CD4-positive, alpha-beta memory T cell (primary cell): ENCODE measurements at regions of chr10 and their contacts with region 1.

Region 1: DNA sequence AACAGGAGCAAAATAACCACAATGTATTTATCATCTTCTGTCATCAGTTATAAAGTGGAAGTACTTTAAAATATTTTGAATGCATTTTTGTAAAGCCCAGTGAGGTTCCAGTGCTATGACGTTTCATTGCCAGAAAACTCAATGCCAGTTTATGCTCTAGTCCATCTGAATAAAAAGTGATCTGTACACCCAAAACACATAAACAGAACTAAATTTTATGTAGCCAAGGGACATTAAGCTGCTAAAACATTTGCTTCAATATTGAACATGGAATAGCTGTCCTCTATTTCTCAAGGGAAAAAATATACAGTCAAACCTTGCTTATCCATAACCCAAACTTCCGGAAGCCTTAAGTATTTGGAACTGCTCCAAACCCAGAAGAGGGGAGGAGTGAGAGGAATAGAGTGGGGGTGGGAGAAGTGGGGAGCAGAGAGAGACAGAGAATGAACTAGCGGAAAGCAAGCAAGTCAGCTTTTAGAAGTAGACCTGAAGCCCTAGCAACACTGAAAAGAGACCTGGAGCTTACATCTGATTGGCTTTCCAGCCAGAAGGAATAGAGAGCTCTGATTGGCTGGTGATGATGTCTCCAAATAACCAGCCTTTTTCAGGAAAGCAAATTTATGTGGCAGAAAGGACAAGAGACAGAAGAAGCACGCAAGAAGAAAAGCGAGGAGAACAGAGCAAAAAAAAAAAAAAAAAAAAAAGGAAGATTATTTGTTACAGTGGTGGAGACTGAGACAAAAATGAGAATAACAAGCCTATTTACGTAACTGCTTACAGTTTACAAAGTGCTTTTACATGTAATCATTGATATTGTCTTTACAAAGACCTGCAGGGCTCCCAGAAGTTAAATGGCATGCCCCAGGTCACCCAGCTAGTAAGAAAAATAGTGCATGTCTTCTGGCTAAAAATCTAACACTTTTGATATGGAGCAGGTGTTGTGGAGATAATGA is 196.0 kb downstream of the RNLS start:
- DNase-seq: peak in 3 of 5 donors; percentile 4 to 31 (median 13)
- H3K4me3 ChIP-seq: peak overlapping the region in 1 of 2 donors; percentile 42
- H3K4me3 Mint-ChIP-seq: peak overlapping the region in 1 of 8 donors; percentile 6
- H3K27ac ChIP-seq: peak overlapping the region; percentile 80
- H3K27ac Mint-ChIP-seq: no peak overlapping the region
- H3K4me1 ChIP-seq: peaks cover 77% of the 10 kb centered on the region
- H3K4me1 Mint-ChIP-seq: peaks cover 16 to 25% (median 21%) of the 10 kb centered on the region in 4 donors
- H3K27me3 ChIP-seq: no peaks in the 10 kb centered on the region
- H3K27me3 Mint-ChIP-seq: no peaks in the 10 kb centered on the region

Region 2: GRCh38 chr10:87850742-87851205 is 536.3 kb before region 1 on chr10:
- CTCF ChIA-PET with region 1: interaction called, 57 read pairs
- POLR2A ChIA-PET with region 1: interaction called, 8 read pairs
- intact Hi-C with region 1: loop called (anchors 1 kb)
- DNase-seq: peak; percentile 38 to 59 (median 52)
- H3K4me3 ChIP-seq: no peak overlapping the region
- H3K4me3 Mint-ChIP-seq: no peak overlapping the region
- H3K27ac ChIP-seq: no peak overlapping the region
- H3K27ac Mint-ChIP-seq: no peak overlapping the region
- H3K4me1 ChIP-seq: peaks cover 6% of the 10 kb centered on the region
- H3K4me1 Mint-ChIP-seq: peaks cover 8 to 14% (median 9%) of the 10 kb centered on the region in 4 donors
- H3K27me3 ChIP-seq: no peaks in the 10 kb centered on the region
- H3K27me3 Mint-ChIP-seq: no peaks in the 10 kb centered on the region

Region 3: DNA sequence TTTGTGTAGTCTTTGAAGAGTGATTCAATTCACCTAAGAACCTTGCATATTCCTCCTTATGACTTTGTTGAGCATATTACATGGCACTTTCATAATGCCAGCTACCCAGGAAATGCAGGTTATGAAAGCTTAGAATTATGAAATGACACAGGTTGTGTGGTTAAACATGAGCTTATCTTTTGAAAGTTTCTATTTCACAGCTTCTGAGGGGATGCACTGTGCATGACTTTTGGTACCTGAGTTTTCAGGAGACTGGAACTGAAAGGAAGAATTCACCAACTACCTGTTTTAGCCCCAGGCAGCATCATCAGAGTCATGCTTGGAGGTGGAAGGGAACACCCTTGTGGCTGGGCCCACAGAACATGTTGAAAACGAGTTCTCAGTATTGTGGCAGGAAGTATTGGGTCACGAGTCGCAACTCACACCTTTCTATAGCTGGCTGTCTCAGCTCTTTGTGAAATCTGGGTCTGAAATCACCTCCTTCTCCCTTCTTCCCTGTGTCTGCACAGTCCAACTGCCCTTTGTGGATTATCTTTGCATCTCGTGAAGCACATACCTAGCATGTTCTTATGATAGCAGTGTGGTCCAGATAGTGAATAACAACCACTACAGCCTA is 295.5 kb before region 1 on chr10:
- CTCF ChIA-PET with region 1: interaction called, 18 read pairs
- POLR2A ChIA-PET with region 1: interaction called, 22 read pairs
- intact Hi-C with region 1: loop called (anchors 2 kb)
- DNase-seq: peak; percentile 72 to 83 (median 82)
- H3K4me3 ChIP-seq: no peak overlapping the region
- H3K4me3 Mint-ChIP-seq: peak overlapping the region in 6 of 8 donors; percentile 2 to 80 (median 62)
- H3K27ac ChIP-seq: peak overlapping the region; percentile 34
- H3K27ac Mint-ChIP-seq: peak overlapping the region; percentile 82 to 94 (median 92)
- H3K4me1 ChIP-seq: peaks cover 39% of the 10 kb centered on the region
- H3K4me1 Mint-ChIP-seq: peaks cover 40 to 47% (median 44%) of the 10 kb centered on the region in 4 donors
- H3K27me3 ChIP-seq: no peaks in the 10 kb centered on the region
- H3K27me3 Mint-ChIP-seq: no peaks in the 10 kb centered on the region

Region 4: DNA sequence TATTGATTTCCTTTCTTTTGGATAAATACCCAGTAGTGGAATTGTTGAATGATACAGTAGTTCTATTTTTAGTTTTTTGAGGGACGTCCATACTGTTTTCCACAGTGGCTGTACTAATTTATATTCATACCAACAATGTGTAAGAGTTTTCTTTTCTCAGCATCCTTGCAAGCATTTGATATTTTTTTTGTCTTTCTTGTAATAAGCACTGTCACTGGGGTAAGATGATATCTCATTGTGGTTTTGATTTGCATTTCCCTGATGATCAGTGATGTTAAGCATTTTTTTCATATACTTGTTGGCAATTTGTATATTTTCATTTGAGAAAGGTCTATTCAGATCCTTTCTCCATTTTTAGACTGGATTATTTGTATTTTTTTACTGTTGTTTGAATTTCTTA is 214.9 kb before region 1 on chr10:
- CTCF ChIA-PET with region 1: interaction called, 9 read pairs
- POLR2A ChIA-PET with region 1: no interaction called
- intact Hi-C with region 1: loop called (anchors 5 kb)
- DNase-seq: peak in 4 of 5 donors; percentile 35 to 48 (median 36)
- H3K4me3 ChIP-seq: no peak overlapping the region
- H3K4me3 Mint-ChIP-seq: peak overlapping the region in 7 of 8 donors; percentile 0 to 50 (median 7)
- H3K27ac ChIP-seq: no peak overlapping the region
- H3K27ac Mint-ChIP-seq: peak overlapping the region in 3 of 7 donors; percentile 4 to 61 (median 25)
- H3K4me1 ChIP-seq: peaks cover 33% of the 10 kb centered on the region
- H3K4me1 Mint-ChIP-seq: peaks cover 34 to 43% (median 38%) of the 10 kb centered on the region in 4 donors
- H3K27me3 ChIP-seq: no peaks in the 10 kb centered on the region
- H3K27me3 Mint-ChIP-seq: no peaks in the 10 kb centered on the region

Region 5: DNA sequence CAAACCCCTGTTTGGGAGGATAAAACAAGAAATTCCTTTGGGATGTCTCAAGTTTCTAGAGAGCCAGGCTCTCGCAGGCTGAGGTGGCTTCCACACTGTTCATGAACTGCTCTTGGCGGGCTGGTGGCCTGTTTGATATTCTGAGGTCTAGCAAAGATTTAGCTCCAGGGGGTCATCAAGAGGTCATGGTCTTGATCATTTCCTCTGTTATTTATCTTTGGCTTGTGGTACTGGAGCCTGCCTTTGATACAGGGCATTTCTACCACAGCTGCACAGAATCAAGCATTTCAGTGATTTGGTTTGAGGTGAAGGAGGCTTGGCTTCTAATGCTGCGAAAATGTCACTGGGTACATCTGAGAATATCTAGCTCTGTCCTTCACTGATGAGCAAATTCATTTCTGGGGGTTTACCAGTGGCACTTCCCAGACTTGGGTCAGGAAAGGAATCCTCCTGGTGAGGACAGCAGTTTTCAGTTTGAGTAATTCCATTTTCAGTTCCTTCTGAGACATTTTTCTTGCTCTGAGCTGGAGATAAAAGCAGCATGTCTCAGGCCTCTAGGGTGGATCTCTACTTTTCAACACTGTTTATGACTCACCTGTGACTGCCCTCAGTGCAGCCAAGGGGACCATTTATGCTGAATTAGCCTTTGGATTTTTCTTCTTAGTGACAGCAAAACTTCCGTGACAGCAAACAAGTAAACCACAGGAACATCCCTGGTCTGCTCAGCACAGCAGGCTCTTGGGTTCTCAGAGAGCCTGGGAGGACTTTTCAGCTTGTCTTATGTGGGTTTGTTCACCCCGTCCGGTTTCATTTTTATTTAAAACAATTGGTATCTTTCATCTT is 116.0 kb before region 1 on chr10:
- CTCF ChIA-PET with region 1: interaction called, 25 read pairs
- POLR2A ChIA-PET with region 1: interaction called, 9 read pairs
- intact Hi-C with region 1: loop called (anchors 2 kb)
- DNase-seq: peak; percentile 66 to 79 (median 71)
- H3K4me3 ChIP-seq: peak overlapping the region; percentile 3 to 6
- H3K4me3 Mint-ChIP-seq: peak overlapping the region; percentile 76 to 81 (median 78)
- H3K27ac ChIP-seq: peak overlapping the region; percentile 32
- H3K27ac Mint-ChIP-seq: peak overlapping the region; percentile 87 to 93 (median 92)
- H3K4me1 ChIP-seq: peaks cover 57% of the 10 kb centered on the region
- H3K4me1 Mint-ChIP-seq: peaks cover 33 to 54% (median 43%) of the 10 kb centered on the region in 4 donors
- H3K27me3 ChIP-seq: no peaks in the 10 kb centered on the region
- H3K27me3 Mint-ChIP-seq: no peaks in the 10 kb centered on the region

Region 6: DNA sequence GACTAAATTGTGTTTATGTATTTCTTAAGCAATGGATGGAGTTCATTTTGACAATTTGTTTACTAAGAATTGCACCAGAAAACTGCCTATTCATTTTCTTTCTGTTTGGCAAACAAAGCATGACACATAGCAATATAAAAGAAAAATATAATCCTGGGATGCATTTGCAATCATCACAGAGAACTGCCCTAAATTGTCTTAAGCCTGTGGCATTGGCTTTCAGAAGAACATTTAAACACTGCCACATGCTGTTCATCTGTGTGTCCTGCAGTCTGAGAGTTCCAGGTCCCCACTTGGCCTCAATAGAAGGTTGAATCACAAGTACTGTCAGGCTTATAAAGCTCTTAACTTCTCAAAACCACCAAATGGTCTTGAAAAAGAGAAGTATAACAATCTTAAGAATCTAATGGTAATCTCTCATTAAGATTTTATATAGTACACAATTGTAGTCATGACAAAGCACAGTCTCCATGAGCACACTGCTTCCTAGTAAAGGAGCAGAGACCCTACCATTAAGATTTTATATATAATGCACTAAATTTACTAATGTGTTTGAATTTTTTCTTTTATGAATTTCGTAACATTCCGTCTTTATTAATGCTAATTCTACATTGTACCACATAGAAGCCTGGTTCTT is 166.1 kb after region 1 on chr10:
- CTCF ChIA-PET with region 1: interaction called, 4 read pairs
- POLR2A ChIA-PET with region 1: no interaction called
- intact Hi-C with region 1: loop called (anchors 1 kb)
- DNase-seq: peak; percentile 43 to 52 (median 49)
- H3K4me3 ChIP-seq: no peak overlapping the region
- H3K4me3 Mint-ChIP-seq: no peak overlapping the region
- H3K27ac ChIP-seq: no peak overlapping the region
- H3K27ac Mint-ChIP-seq: no peak overlapping the region
- H3K4me1 ChIP-seq: no peaks in the 10 kb centered on the region
- H3K4me1 Mint-ChIP-seq: no peaks in the 10 kb centered on the region
- H3K27me3 ChIP-seq: no peaks in the 10 kb centered on the region
- H3K27me3 Mint-ChIP-seq: no peaks in the 10 kb centered on the region